ENCODE measurements at regions of chr14 and their contacts with region 1.

Region 1: DNA sequence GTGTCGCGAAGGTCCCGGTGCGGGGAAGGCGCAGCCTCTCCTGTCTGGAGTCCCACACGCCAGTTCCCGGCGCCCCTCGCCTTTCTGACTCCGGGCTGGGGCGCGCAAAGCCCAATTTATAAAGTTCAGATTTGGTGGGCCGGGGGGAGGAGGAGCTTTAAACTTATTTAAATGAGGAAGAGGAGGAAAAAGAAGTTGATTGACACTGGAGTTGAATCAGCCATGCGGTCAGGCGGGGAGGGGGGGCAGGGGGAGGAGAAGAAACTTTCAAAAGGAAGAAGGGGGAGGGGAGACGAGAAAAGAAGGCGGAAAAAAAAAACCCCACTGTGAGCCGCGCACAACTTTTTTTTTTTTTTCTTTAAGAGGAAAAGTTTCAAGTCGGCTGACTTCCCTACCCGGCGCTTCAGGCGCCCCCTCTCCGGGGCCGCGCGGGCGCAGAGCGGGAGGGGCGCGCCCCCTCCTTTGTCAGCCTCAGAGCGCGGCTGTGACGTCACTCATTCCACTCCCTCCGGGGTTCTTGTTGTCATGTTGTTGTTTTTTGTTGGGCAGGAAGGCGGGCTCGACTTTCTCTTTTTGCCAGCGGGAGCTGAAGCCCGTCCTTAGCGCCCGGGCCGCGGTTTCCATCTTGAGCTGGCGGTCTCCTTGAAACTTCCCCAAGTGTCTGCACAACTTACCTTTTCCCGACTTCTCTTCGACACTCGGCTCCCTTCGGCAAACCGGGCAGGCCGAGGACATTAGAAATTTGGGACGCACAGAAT is at the start of gene ZFP36L1:
- DNase-seq: peak; percentile 95 to 96
- H3K4me3 ChIP-seq: peak within 1 kb of the TSS; percentile 88 to 95
- H3K27ac ChIP-seq: peak within 1 kb of the TSS; percentile 96 to 100
- H3K4me1 ChIP-seq: peaks cover 0 to 33% (median 14%) of the 10 kb centered on the region in 4 donors
- H3K27me3 ChIP-seq: no peaks in the 10 kb centered on the region
- CTCF ChIP-seq: peak in 1 of 2 experiments; percentile 14

Region 2: GRCh38 chr14:67943947-67944346 is 849.2 kb before region 1 on chr14:
- intact Hi-C with region 1: loop called (anchors 10 kb)
- DNase-seq: peak; percentile 78 to 79
- H3K4me3 ChIP-seq: no peak overlapping the region
- H3K27ac ChIP-seq: peak overlapping the region; percentile 75 to 80
- H3K4me1 ChIP-seq: peaks cover 8 to 51% (median 31%) of the 10 kb centered on the region in 4 donors
- H3K27me3 ChIP-seq: no peaks in the 10 kb centered on the region
- CTCF ChIP-seq: peak; percentile 69 to 94

Region 3: DNA sequence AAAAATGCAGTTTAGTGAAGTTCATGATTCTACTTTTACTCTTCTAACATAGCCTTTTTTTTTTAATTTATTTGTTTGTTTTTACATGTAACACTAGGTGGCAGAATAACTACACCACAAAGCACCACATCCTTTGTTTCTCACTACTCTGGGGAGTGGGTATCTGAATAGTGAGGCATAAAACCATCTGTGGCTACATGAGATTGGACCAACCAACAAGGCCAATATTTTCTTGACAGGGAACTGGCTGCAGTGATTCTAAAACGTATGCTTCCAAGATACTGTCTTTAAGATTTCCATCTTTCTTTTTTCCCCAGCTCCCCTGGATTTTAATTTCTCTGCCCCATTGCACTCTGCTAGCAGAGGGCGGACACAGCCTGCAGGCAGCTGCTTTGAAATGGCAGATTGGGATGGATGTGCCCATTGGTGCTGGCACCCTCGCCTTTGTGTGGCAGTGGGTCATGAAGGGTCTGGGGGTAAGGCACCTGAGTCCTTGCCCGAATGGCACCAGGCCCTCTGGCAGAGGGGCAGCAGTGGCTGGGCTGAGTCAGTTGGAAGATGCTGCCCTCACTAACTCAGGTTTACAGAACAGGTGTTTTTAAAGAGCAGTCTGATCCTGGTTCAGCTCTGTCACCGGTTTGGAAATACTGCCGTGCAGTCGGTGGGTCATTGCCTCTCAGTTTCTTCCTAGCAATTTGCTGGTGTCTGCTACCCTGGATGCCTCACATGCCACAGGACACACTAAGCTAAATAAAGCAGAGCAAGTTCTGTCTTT is 544.5 kb before region 1 on chr14:
- intact Hi-C with region 1: loop called (anchors 5 kb)
- DNase-seq: peak in 1 of 2 donors; percentile 69
- H3K4me3 ChIP-seq: no peak overlapping the region
- H3K27ac ChIP-seq: peak overlapping the region; percentile 87 to 89
- H3K4me1 ChIP-seq: peaks cover 0 to 82% (median 68%) of the 10 kb centered on the region in 4 donors
- H3K27me3 ChIP-seq: no peaks in the 10 kb centered on the region
- CTCF ChIP-seq: peak; percentile 49 to 62

Region 4: GRCh38 chr14:68526420-68527105 is 266.6 kb before region 1 on chr14:
- intact Hi-C with region 1: loop called (anchors 5 kb)
- DNase-seq: peak; percentile 79 to 92
- H3K4me3 ChIP-seq: no peak overlapping the region
- H3K27ac ChIP-seq: peak overlapping the region; percentile 84
- H3K4me1 ChIP-seq: peaks cover 0 to 73% (median 48%) of the 10 kb centered on the region in 4 donors
- H3K27me3 ChIP-seq: no peaks in the 10 kb centered on the region
- CTCF ChIP-seq: peak in 1 of 2 experiments; percentile 9

Region 5: GRCh38 chr14:68548194-68549056 is 244.7 kb before region 1 on chr14:
- intact Hi-C with region 1: loop called (anchors 5 kb)
- DNase-seq: peak; percentile 93 to 97
- H3K4me3 ChIP-seq: peak overlapping the region in 1 of 2 donors; percentile 15
- H3K27ac ChIP-seq: peak overlapping the region; percentile 94 to 96
- H3K4me1 ChIP-seq: peaks cover 0 to 96% (median 75%) of the 10 kb centered on the region in 4 donors
- H3K27me3 ChIP-seq: no peaks in the 10 kb centered on the region
- CTCF ChIP-seq: no peak

Region 6: GRCh38 chr14:68627880-68628607 is 165.1 kb before region 1 on chr14:
- intact Hi-C with region 1: loop called (anchors 10 kb)
- DNase-seq: peak in 1 of 2 donors; percentile 15
- H3K4me3 ChIP-seq: no peak overlapping the region
- H3K27ac ChIP-seq: peak overlapping the region; percentile 84 to 88
- H3K4me1 ChIP-seq: peaks cover 0 to 49% (median 33%) of the 10 kb centered on the region in 4 donors
- H3K27me3 ChIP-seq: no peaks in the 10 kb centered on the region
- CTCF ChIP-seq: no peak